ENCODE measurements at regions of chr5 and their contacts with region 1.

Region 1: GRCh38 chr5:134041570-134042411 is 37.0 kb upstream of the VDAC1 start:
- DNase-seq: no peak
- H3K4me3 Mint-ChIP-seq: no peak overlapping the region
- H3K27ac Mint-ChIP-seq: no peak overlapping the region
- H3K4me1 Mint-ChIP-seq: peaks cover 51% of the 10 kb centered on the region
- H3K27me3 Mint-ChIP-seq: no peaks in the 10 kb centered on the region

Region 2: DNA sequence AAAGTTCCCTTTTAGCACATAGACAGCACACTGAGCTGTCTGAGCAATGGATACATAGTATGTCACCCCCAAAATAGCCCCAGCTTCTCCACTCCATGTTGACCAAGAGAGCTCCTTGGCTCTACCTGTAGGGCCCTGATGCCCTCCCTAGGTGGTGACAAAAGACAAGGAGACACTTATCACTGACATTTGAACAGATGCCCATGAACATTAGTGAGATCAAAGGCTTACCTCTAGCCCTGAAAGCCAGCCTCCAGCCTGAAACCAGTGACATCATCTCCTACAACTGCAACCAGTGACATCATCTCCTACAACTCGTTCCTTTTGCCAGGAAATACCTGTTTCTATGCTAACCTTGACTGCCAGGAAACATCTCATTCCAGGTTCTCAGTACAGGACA is 552.2 kb before region 1 on chr5:
- CTCF ChIA-PET with region 1: no interaction called
- intact Hi-C with region 1: loop called (anchors 1 kb)
- DNase-seq: peak; percentile 74
- H3K4me3 Mint-ChIP-seq: no peak overlapping the region
- H3K27ac Mint-ChIP-seq: no peak overlapping the region
- H3K4me1 Mint-ChIP-seq: peaks cover 9% of the 10 kb centered on the region
- H3K27me3 Mint-ChIP-seq: no peaks in the 10 kb centered on the region

Region 3: DNA sequence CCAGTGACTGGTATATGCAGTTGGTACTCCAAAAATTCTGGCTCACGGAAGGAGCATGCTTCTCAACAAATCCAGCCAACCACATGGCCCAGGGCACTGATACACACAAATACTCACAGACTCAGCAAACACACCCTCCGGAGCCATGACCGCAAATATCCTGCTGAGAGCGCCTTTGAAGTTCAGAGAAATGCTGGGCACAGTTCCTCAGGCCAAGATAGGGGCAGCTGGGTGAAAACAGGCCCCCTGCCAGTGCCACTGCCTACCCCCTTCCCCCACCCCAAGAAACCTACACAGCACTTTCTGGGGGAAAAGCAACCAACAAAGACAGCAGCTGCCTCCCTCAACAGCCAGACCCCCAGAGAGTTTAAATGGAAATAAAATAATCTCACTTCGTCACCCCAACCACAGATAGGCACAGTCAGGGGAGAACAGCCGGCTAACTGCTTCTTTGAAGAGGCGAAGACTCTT is 193.4 kb before region 1 on chr5:
- CTCF ChIA-PET with region 1: no interaction called
- intact Hi-C with region 1: no loop called
- DNase-seq: peak; percentile 27
- H3K4me3 Mint-ChIP-seq: no peak overlapping the region
- H3K27ac Mint-ChIP-seq: no peak overlapping the region
- H3K4me1 Mint-ChIP-seq: peaks cover 4% of the 10 kb centered on the region
- H3K27me3 Mint-ChIP-seq: peaks cover 3% of the 10 kb centered on the region

Region 4: GRCh38 chr5:134053840-134054338 is 12.1 kb after region 1 on chr5:
- CTCF ChIA-PET with region 1: interaction called, 99 read pairs
- intact Hi-C with region 1: no loop called
- DNase-seq: no peak
- H3K4me3 Mint-ChIP-seq: no peak overlapping the region
- H3K27ac Mint-ChIP-seq: peak overlapping the region; percentile 65
- H3K4me1 Mint-ChIP-seq: peaks cover 52% of the 10 kb centered on the region
- H3K27me3 Mint-ChIP-seq: no peaks in the 10 kb centered on the region

Region 5: DNA sequence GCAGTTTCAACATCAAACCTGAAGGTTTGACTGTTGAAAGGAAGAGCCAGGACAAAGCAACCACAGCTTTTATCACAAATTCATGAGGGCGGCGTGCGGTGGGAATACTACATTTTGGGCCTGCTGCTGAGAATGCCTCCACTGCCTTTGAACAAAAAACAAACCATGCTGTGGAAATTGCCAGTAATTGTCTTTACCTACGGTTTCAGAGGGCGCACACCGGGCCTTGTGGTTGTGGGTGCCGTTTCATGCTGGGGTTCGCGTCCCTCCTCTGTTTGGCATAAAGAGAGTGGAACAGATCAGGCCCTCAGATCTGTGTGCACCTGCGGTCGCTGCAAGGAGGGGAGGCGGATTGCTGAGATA is 45.1 kb after region 1 on chr5:
- CTCF ChIA-PET with region 1: interaction called, 61 read pairs
- intact Hi-C with region 1: no loop called
- DNase-seq: peak; percentile 85
- H3K4me3 Mint-ChIP-seq: peak overlapping the region; percentile 59
- H3K27ac Mint-ChIP-seq: peak overlapping the region; percentile 86
- H3K4me1 Mint-ChIP-seq: peaks cover 82% of the 10 kb centered on the region
- H3K27me3 Mint-ChIP-seq: no peaks in the 10 kb centered on the region

Region 6: DNA sequence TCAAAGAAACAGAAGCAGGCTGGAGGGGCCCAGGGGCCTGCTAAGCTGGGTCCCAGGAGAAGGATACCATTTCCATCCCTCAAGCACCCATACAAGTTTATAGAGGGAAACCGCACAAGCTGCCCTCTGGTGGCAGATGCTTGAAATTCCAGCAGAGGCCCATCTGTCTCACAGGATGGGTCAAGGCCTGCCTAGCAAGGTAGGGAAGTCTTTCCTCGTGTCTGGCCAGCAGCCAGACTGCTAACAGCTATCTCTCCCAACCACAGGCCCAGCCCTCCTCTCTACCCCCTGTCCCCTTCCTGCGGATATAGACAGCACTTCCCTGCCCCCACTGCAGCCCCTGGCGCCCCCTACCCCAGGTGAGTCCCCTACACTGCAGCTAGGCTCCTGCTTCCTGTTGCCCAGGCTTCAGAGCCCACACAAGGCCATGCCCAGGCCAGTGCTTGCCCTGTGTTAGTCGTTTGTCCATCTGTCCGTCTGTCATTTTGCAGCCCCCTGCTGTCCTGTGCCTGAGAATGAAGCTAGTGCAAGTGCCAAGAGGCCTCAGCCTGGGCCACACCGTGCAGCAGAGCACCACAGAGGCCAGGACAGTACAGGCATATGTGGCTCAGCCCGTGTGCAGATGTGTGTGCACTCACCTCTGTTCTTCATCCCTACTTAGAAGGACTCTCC is 98.9 kb after region 1 on chr5:
- CTCF ChIA-PET with region 1: interaction called, 593 read pairs
- intact Hi-C with region 1: loop called (anchors 1 kb)
- DNase-seq: peak; percentile 83
- H3K4me3 Mint-ChIP-seq: no peak overlapping the region
- H3K27ac Mint-ChIP-seq: peak overlapping the region; percentile 82
- H3K4me1 Mint-ChIP-seq: peaks cover 66% of the 10 kb centered on the region
- H3K27me3 Mint-ChIP-seq: no peaks in the 10 kb centered on the region

Region 7: DNA sequence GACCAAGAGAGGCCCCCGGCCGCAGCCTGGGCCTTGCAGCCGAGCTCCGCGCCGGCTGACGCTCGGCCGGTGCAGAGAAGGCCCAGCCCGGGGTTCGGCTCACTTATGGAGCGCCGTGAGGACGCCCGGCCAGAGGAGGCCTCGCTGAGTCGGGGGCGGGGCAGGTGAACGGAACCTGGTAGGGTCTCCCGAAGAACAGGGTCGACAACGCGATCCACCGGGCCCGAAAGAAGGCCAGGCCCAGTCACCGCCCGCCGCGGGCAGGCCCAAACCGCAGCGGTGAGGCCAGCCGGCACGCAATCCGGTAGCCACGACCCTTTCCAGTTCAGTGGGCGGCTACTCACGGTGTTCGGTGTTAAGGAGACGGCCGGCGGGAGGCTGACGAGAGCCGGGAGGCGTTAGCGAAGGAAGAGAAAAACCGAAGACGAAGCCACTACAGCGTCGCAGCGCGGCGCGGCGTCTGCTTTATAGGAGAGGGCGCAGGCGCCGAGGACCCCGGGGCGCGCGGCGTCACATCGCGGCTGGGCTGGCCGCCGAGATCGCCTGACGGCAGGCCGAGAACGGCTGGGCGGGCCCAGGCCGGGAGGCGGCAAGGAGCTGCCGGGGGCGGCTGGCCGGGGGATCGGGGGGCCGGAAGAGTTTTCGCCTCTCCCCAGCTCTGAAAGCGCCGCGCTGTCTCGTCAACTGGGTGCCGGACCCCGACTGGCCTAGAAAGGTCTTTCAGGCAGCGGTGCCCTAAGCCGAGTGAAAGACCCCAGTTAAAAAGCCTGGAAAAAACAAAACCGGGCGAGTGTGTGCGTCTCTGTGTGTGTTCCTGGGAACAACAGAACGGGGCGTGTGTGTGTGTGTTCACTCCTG is 134.9 kb after region 1 on chr5 and contains the start of gene SKP1:
- CTCF ChIA-PET with region 1: interaction called, 9 read pairs
- intact Hi-C with region 1: loop called (anchors 1 kb)
- DNase-seq: peak; percentile 83
- H3K4me3 Mint-ChIP-seq: peak within 1 kb of the TSS; percentile 96
- H3K27ac Mint-ChIP-seq: peak within 1 kb of the TSS; percentile 94
- H3K4me1 Mint-ChIP-seq: peaks cover 31% of the 10 kb centered on the region
- H3K27me3 Mint-ChIP-seq: no peaks in the 10 kb centered on the region
- total RNA-seq, gene SKP1: 307 to 309 TPM

Region 8: GRCh38 chr5:134215757-134216156 is 174.0 kb after region 1 on chr5:
- CTCF ChIA-PET with region 1: no interaction called
- intact Hi-C with region 1: no loop called
- DNase-seq: no peak
- H3K4me3 Mint-ChIP-seq: no peak overlapping the region
- H3K27ac Mint-ChIP-seq: no peak overlapping the region
- H3K4me1 Mint-ChIP-seq: peaks cover 65% of the 10 kb centered on the region
- H3K27me3 Mint-ChIP-seq: no peaks in the 10 kb centered on the region

Measured in activated naive CD4-positive, alpha-beta T cell treated with anti-CD3 and anti-CD28 coated beads for 36 hours (primary cell).